ENCODE measurements at regions of chr9 and their contacts with region 1.

Region 1: DNA sequence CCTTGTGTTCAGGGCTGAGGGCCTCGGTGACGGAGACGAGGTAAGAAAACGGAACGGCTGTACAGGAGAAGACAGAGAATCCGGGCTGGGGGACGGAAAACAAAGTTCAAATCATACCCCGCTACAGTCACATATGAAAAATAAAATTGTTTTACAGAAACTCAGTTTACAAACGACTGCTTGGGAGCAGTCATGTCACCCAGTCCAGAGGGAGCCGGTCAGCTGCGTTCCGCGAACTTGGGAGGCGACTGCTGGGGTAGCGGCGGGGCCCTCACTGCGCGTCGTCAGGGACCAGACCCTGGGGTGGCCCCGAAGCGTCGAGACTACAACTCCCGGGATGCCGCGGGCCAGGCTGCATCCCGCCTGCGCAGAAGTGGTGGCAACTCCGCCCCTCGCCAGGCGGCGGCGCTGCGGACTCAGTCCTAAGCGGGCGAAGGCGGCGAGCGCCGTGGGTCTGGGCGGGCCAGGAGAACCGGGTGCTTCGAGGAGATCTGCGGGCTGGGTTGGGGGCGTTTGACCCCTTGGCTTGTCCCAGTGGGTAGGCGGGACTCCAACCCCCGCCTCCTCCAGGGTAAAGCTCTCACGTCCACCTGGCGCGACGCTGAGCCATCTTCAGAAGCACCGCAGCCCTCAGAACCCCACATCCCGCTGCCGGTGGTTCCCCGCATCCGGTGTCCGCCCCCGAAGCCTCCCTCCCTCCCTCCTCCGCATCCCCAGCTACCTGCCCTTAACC is 4.0 kb downstream of the SIT1 start:
- DNase-seq: peak; percentile 97 to 98
- ATAC-seq: peak; percentile 97
- H3K4me3 ChIP-seq: peak overlapping the region; percentile 37 to 50
- H3K27ac ChIP-seq: peak overlapping the region; percentile 31 to 62
- H3K4me1 ChIP-seq: no peaks in the 10 kb centered on the region
- H3K27me3 ChIP-seq: no peaks in the 10 kb centered on the region

Region 2: GRCh38 chr9:35563791-35564197 is 82.9 kb before region 1 on chr9:
- intact Hi-C with region 1: loop called in 1 of 2 experiments (anchors 10 kb)
- DNase-seq: peak; percentile 69 to 85
- ATAC-seq: peak; percentile 60
- H3K4me3 ChIP-seq: no peak overlapping the region
- H3K27ac ChIP-seq: peak overlapping the region; percentile 46 to 95
- H3K4me1 ChIP-seq: peaks cover 0 to 2% of the 10 kb centered on the region in 2 donors
- H3K27me3 ChIP-seq: no peaks in the 10 kb centered on the region

Measured in aorta (tissue), 5 donors.